ENCODE measurements at regions of chr1 and their contacts with region 1.

Region 1: DNA sequence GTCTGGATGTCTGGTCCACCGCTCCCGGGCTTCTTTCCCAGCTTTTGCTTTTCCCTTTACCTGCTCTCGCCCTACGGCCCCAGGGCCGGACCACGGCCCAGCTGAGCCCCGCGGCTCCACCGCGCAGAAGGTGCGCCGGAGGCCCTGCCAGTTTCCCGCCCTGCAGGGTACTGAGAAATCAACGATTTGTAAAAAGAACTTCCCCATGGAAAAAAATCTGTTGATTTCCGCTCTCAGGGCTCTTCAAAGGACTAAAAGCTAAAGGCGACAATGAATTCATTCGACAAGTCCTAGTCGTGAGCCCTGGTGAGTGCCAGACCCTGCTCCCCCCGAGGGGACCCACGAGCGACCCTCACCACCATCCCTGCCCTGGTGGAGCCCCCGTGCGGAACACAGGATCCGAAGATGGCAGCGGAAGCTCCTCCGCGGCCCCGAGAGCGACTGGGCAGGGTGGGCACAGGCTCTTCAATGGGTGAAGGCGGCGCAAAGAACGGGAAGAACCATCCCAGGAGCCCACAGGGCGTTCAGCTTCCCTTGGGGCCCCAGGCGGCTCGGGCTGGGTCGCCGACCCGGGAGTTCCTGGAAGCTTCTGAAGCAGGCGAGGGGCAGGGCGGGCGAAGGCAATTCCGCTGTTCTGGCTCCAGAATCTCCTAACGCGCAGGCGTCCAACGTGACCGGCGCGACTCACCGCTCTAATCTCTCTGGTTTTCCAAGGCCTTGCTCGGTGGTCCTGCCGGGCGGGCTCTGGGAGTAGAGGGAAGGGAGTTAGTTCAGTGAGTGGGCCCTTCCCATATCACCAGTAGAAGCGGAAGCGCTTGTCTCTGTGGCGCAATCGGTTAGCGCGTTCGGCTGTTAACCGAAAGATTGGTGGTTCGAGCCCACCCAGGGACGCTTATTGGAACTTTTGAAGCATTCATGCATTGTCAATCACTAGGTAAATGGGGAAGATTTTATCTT is 6.6 kb upstream of the RNU1-2 start:
- DNase-seq: peak; percentile 37 to 81 (median 55)
- ATAC-seq: peak; percentile 66
- H3K4me3 ChIP-seq: peak overlapping the region; percentile 62 to 69
- H3K4me3 Mint-ChIP-seq: peak overlapping the region; percentile 94
- H3K27ac ChIP-seq: peak overlapping the region; percentile 53 to 76
- H3K27ac Mint-ChIP-seq: peak overlapping the region; percentile 96
- H3K4me1 ChIP-seq: no peaks in the 10 kb centered on the region
- H3K4me1 Mint-ChIP-seq: peaks cover 14% of the 10 kb centered on the region
- H3K27me3 ChIP-seq: no peaks in the 10 kb centered on the region
- H3K27me3 Mint-ChIP-seq: no peaks in the 10 kb centered on the region
- CTCF ChIP-seq: no peak

Region 2: GRCh38 chr1:16904560-16905111 is 15.5 kb after region 1 on chr1:
- CTCF ChIA-PET with region 1: interaction called, 3 read pairs
- POLR2A ChIA-PET with region 1: interaction called, 13 read pairs
- intact Hi-C with region 1: no loop called
- DNase-seq: peak; percentile 97 to 100 (median 99)
- ATAC-seq: peak; percentile 95
- H3K4me3 ChIP-seq: peak overlapping the region; percentile 50
- H3K4me3 Mint-ChIP-seq: no peak overlapping the region
- H3K27ac ChIP-seq: peak overlapping the region; percentile 97 to 99
- H3K27ac Mint-ChIP-seq: no peak overlapping the region
- H3K4me1 ChIP-seq: peaks cover 44% of the 10 kb centered on the region
- H3K4me1 Mint-ChIP-seq: peaks cover 32% of the 10 kb centered on the region
- H3K27me3 ChIP-seq: no peaks in the 10 kb centered on the region
- H3K27me3 Mint-ChIP-seq: no peaks in the 10 kb centered on the region
- CTCF ChIP-seq: no peak

Measured in CD8-positive, alpha-beta T cell (primary cell).